ENCODE measurements at regions of chr14 and their contacts with region 1.

Region 1: GRCh38 chr14:35385042-35385839 is 19.3 kb downstream of the NFKBIA start:
- DNase-seq: peak; percentile 85 to 91 (median 87)
- ATAC-seq: peak; percentile 95 to 96 (median 95)
- H3K4me3 ChIP-seq: no peak overlapping the region
- H3K27ac ChIP-seq: peak overlapping the region; percentile 61 to 95 (median 84)
- H3K4me1 ChIP-seq: peaks cover 9 to 37% (median 27%) of the 10 kb centered on the region in 12 donors
- H3K27me3 ChIP-seq: no peaks in the 10 kb centered on the region
- CTCF ChIP-seq: no peak
- POLR2A ChIP-seq: peak in 1 of 2 donors; percentile 39

Region 2: GRCh38 chr14:35341446-35342159 is 43.6 kb before region 1 on chr14:
- intact Hi-C with region 1: loop called in 6 of 10 experiments (anchors 1 to 5 kb)
- DNase-seq: peak; percentile 94 to 98 (median 96)
- ATAC-seq: peak; percentile 91 to 95 (median 92)
- H3K4me3 ChIP-seq: peak overlapping the region in 10 of 12 donors; percentile 14 to 51 (median 38)
- H3K27ac ChIP-seq: peak overlapping the region; percentile 85 to 99 (median 94)
- H3K4me1 ChIP-seq: peaks cover 16 to 74% (median 47%) of the 10 kb centered on the region in 12 donors
- H3K27me3 ChIP-seq: no peaks in the 10 kb centered on the region
- CTCF ChIP-seq: no peak
- POLR2A ChIP-seq: peak in 1 of 2 donors; percentile 74

Region 3: GRCh38 chr14:35506927-35507326 is 121.7 kb after region 1 on chr14:
- intact Hi-C with region 1: no loop called
- DNase-seq: no peak
- ATAC-seq: no peak
- H3K4me3 ChIP-seq: no peak overlapping the region
- H3K27ac ChIP-seq: no peak overlapping the region
- H3K4me1 ChIP-seq: no peaks in the 10 kb centered on the region
- H3K27me3 ChIP-seq: no peaks in the 10 kb centered on the region
- CTCF ChIP-seq: no peak
- POLR2A ChIP-seq: no peak

Region 4: GRCh38 chr14:35519986-35520385 is 134.7 kb after region 1 on chr14:
- intact Hi-C with region 1: no loop called
- DNase-seq: no peak
- ATAC-seq: no peak
- H3K4me3 ChIP-seq: no peak overlapping the region
- H3K27ac ChIP-seq: no peak overlapping the region
- H3K4me1 ChIP-seq: no peaks in the 10 kb centered on the region
- H3K27me3 ChIP-seq: peaks cover 0 to 12% (median 0%) of the 10 kb centered on the region in 9 donors
- CTCF ChIP-seq: no peak
- POLR2A ChIP-seq: no peak

Region 5: DNA sequence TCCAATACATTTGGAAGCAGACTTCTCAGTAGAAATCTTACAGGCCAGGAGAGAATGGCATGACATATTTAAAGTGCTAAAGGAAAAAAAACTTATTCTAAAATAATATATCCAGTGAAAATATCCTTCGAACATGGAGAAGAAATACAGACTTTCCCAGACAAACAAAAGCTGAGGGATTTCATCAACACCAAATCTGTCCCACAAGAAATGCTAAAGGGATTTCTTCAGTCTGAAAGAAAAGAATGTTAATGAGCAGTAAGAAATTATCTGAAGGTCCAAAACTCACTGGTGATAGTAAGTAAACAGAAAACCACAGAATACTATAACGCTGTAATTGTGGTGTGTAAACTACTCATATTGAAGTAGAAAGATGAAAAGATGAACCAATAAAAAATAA is 252.6 kb after region 1 on chr14:
- intact Hi-C with region 1: no loop called
- DNase-seq: no peak
- ATAC-seq: no peak
- H3K4me3 ChIP-seq: no peak overlapping the region
- H3K27ac ChIP-seq: no peak overlapping the region
- H3K4me1 ChIP-seq: no peaks in the 10 kb centered on the region
- H3K27me3 ChIP-seq: no peaks in the 10 kb centered on the region
- CTCF ChIP-seq: no peak
- POLR2A ChIP-seq: no peak